HepG2 (cell line): ENCODE measurements at regions of chr10 and their contacts with region 1.

Region 1: GRCh38 chr10:53839440-53840039 is 961.5 kb downstream of the PCDH15 start:
- DNase-seq: peak; percentile 25
- ATAC-seq: no peak
- H3K4me3 ChIP-seq: no peak overlapping the region
- H3K27ac ChIP-seq: no peak overlapping the region
- H3K4me1 ChIP-seq: no peaks in the 10 kb centered on the region
- H3K27me3 ChIP-seq: no peaks in the 10 kb centered on the region
- CTCF ChIP-seq: no peak
- EP300 ChIP-seq: no peak
- POLR2A ChIP-seq: no peak
- RAD21 ChIP-seq: no peak

Region 2: DNA sequence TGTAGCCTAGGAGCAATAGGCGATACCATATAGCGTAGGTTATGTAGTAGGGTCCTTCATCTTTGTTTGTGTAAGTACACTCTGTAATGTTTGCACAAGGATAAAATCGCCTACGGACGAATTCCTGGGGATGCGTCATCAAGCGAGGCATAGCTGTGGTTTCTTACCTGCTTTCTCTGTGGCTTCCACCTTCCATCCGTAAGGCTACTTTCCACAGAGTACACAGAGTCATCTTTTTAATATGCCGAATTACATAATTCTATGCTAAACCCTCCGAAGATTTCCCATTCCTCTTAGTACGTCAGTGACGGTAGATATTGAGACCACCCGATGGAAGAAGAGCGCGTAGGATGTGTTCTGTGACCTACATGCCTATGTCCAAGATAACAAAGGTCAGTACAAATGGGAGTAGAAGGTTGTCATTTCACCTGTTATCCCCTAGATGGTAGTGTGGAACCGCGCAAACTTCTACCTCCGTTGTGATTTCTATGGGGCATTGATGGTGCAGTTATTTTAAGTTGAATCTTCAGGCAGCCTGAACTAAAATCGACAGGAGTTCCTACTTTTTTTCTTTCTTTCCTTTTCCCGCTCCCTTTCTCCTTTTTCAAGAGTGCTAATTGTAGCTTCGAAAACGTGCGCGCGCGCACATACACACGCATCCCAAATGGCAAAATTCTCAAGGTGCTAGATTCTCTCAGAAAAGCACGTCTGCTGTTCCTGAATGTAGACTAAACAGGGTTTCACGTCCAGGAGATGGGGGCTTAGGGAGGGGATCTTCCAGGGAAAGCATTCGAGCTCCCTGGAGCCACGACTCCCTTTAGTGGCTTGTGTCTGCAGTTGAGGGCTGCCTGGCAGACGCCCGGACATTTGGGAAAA is 955.3 kb before region 1 on chr10:
- CTCF ChIA-PET with region 1: no interaction called
- POLR2A ChIA-PET with region 1: no interaction called
- in situ Hi-C with region 1: no loop called
- intact Hi-C with region 1: loop called (anchors 10 kb)
- DNase-seq: peak; percentile 92
- ATAC-seq: peak; percentile 98
- H3K4me3 ChIP-seq: no peak overlapping the region; a peak in 1 of 6 replicates
- H3K27ac ChIP-seq: no peak overlapping the region
- H3K4me1 ChIP-seq: peaks cover 10% of the 10 kb centered on the region
- H3K27me3 ChIP-seq: no peaks in the 10 kb centered on the region; a peak in 1 of 5 replicates
- CTCF ChIP-seq: peak; percentile 87
- EP300 ChIP-seq: peak; percentile 43 to 58; a peak in 3 of 4 replicates
- POLR2A ChIP-seq: no peak
- RAD21 ChIP-seq: peak; percentile 75

Region 3: GRCh38 chr10:53864846-53865245 is 25.3 kb after region 1 on chr10:
- CTCF ChIA-PET with region 1: no interaction called
- POLR2A ChIA-PET with region 1: no interaction called
- in situ Hi-C with region 1: no loop called
- intact Hi-C with region 1: no loop called
- DNase-seq: no peak
- ATAC-seq: no peak
- H3K4me3 ChIP-seq: no peak overlapping the region
- H3K27ac ChIP-seq: no peak overlapping the region
- H3K4me1 ChIP-seq: no peaks in the 10 kb centered on the region
- H3K27me3 ChIP-seq: no peaks in the 10 kb centered on the region
- CTCF ChIP-seq: no peak
- EP300 ChIP-seq: no peak
- POLR2A ChIP-seq: no peak
- RAD21 ChIP-seq: no peak

Region 4: DNA sequence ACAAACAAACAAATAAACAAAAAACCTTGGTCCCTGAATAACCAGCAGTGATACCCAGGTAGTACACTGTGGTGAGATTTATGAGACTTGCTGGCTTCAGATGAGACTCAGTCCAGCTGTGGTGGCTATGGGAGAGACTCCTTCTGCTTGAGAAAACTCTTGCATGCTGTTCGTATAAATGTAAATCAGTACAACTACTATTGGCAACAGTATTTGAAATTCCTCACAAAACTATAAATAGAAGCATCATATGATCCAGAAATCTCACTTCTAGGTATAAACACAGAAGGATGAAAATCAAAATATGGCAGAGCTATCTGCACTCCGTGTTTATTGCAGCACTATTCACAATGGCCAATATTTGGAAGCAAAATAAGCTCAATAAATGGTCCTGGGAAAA is 269.4 kb after region 1 on chr10:
- CTCF ChIA-PET with region 1: no interaction called
- POLR2A ChIA-PET with region 1: no interaction called
- in situ Hi-C with region 1: no loop called
- intact Hi-C with region 1: loop called (anchors 10 kb)
- DNase-seq: no peak
- ATAC-seq: no peak
- H3K4me3 ChIP-seq: no peak overlapping the region
- H3K27ac ChIP-seq: no peak overlapping the region
- H3K4me1 ChIP-seq: no peaks in the 10 kb centered on the region
- H3K27me3 ChIP-seq: no peaks in the 10 kb centered on the region
- CTCF ChIP-seq: no peak
- EP300 ChIP-seq: no peak
- POLR2A ChIP-seq: no peak
- RAD21 ChIP-seq: no peak

Region 5: DNA sequence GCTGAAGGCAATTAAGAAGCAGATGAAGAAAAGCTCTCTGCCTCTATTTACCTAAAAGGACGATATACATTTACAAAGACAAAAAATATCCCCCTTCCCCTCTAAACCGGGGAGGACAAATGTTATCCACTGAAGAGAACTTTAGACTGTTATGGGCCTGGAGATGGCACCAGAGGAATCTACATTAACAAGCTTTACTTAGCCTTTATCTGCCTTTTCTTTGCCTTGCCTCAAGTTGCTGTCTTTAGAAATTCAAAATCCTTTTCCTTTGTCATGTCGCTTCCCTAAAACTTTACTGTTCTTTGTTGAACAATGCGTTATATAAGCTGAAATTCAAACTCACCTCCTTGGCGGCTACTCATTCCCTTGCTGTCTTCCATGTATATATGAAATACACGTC is 556.5 kb after region 1 on chr10:
- CTCF ChIA-PET with region 1: no interaction called
- POLR2A ChIA-PET with region 1: no interaction called
- in situ Hi-C with region 1: loop called (anchors 25 kb)
- intact Hi-C with region 1: no loop called
- DNase-seq: no peak
- ATAC-seq: no peak
- H3K4me3 ChIP-seq: no peak overlapping the region
- H3K27ac ChIP-seq: no peak overlapping the region
- H3K4me1 ChIP-seq: no peaks in the 10 kb centered on the region
- H3K27me3 ChIP-seq: no peaks in the 10 kb centered on the region; a peak in 1 of 5 replicates
- CTCF ChIP-seq: no peak
- EP300 ChIP-seq: no peak
- POLR2A ChIP-seq: no peak
- RAD21 ChIP-seq: no peak

Region 6: DNA sequence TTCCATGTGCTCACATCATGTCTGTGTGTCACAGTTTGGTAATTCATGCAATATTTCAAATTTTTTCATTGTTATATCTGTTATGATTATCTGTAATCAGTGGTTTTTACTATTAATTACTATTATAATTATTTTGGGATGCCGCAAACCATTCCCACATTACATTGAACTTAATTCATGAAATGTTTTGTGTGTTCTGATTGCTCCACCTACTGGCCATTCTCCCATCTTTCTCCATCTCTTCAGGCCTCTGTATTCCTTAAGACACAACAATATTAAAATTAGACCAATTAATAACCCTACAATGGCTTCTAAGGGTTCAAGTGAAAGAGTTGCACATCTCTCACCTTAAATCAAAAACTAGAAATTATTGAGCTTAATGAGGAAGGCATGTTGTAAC is 563.0 kb after region 1 on chr10:
- CTCF ChIA-PET with region 1: interaction called, 7 read pairs
- POLR2A ChIA-PET with region 1: no interaction called
- in situ Hi-C with region 1: loop called (anchors 25 kb)
- intact Hi-C with region 1: loop called (anchors 1 kb)
- DNase-seq: peak; percentile 11
- ATAC-seq: no peak
- H3K4me3 ChIP-seq: no peak overlapping the region
- H3K27ac ChIP-seq: no peak overlapping the region
- H3K4me1 ChIP-seq: no peaks in the 10 kb centered on the region
- H3K27me3 ChIP-seq: no peaks in the 10 kb centered on the region; a peak in 1 of 5 replicates
- CTCF ChIP-seq: peak; percentile 41
- EP300 ChIP-seq: no peak
- POLR2A ChIP-seq: no peak
- RAD21 ChIP-seq: no peak

Region 7: DNA sequence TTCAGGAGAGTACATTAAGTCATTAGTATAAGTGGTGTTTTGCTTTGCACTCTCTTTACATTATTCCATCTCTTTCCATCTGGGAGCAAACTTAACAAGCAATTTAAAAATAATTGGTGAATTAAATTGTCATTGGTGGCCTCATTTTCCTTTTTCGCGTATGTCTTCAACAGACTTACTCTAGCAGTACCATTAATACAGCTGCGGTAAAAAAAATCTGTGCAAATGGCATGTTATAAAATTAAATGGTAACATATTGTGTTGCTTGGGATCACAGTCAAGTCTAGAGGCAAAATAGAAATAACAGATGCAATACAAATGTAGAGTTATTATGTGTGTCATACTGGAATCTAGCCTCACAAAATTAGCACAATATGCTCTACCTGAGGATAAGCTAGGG is 639.1 kb after region 1 on chr10:
- CTCF ChIA-PET with region 1: no interaction called
- POLR2A ChIA-PET with region 1: no interaction called
- in situ Hi-C with region 1: no loop called
- intact Hi-C with region 1: no loop called
- DNase-seq: no peak
- ATAC-seq: no peak
- H3K4me3 ChIP-seq: no peak overlapping the region
- H3K27ac ChIP-seq: no peak overlapping the region
- H3K4me1 ChIP-seq: no peaks in the 10 kb centered on the region
- H3K27me3 ChIP-seq: no peaks in the 10 kb centered on the region
- CTCF ChIP-seq: no peak
- EP300 ChIP-seq: no peak
- POLR2A ChIP-seq: no peak
- RAD21 ChIP-seq: no peak